ENCODE measurements at regions of chr12 and their contacts with region 1.

Region 1: DNA sequence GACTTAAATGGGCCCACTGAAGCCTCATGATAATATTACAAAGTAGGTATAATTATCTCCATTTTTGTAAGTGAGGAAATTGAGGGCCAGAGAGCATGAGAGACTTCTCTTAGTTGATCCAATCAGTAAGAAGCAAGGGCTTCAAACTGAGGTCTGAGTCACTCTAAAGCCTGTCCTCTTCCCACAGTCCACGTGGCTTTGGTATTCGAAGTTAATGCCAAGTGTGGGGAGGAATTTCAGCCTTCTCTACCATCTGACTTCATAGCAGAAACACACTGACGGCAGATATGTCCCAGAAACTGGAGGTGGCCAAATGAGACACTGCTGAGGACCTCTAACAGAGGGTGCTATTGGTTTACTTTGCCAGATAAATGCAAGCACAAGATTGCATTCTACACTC is 114.4 kb upstream of the OVCH1 start:
- DNase-seq: no peak
- H3K4me3 ChIP-seq: no peak overlapping the region
- H3K27ac ChIP-seq: no peak overlapping the region
- H3K4me1 ChIP-seq: no peaks in the 10 kb centered on the region
- H3K27me3 ChIP-seq: no peaks in the 10 kb centered on the region
- CTCF ChIP-seq: no peak

Region 2: GRCh38 chr12:29655861-29656260 is 44.0 kb after region 1 on chr12:
- CTCF ChIA-PET with region 1: no interaction called
- POLR2A ChIA-PET with region 1: interaction called, 11 read pairs
- intact Hi-C with region 1: no loop called
- DNase-seq: no peak
- H3K4me3 ChIP-seq: no peak overlapping the region
- H3K27ac ChIP-seq: no peak overlapping the region
- H3K4me1 ChIP-seq: no peaks in the 10 kb centered on the region
- H3K27me3 ChIP-seq: no peaks in the 10 kb centered on the region
- CTCF ChIP-seq: no peak

Measured in PC-9 (cell line).